ENCODE measurements at regions of chr11 and their contacts with region 1.

Region 1: GRCh38 chr11:96219981-96220623 is 122.9 kb downstream of the MAML2 start:
- DNase-seq: no peak

Region 2: GRCh38 chr11:95789506-95790122 is 430.5 kb before region 1 on chr11 and contains the start of gene FAM76B:
- intact Hi-C with region 1: loop called in 1 of 2 experiments (anchors 5 kb)
- DNase-seq: peak; percentile 99
- total RNA-seq, gene FAM76B: 17.3 to 24.3 TPM

Region 3: GRCh38 chr11:96112201-96113128 is 107.6 kb before region 1 on chr11:
- intact Hi-C with region 1: no loop called
- DNase-seq: no peak